H1 (cell line): ENCODE measurements at regions of chr20 and their contacts with region 1.

Region 1: DNA sequence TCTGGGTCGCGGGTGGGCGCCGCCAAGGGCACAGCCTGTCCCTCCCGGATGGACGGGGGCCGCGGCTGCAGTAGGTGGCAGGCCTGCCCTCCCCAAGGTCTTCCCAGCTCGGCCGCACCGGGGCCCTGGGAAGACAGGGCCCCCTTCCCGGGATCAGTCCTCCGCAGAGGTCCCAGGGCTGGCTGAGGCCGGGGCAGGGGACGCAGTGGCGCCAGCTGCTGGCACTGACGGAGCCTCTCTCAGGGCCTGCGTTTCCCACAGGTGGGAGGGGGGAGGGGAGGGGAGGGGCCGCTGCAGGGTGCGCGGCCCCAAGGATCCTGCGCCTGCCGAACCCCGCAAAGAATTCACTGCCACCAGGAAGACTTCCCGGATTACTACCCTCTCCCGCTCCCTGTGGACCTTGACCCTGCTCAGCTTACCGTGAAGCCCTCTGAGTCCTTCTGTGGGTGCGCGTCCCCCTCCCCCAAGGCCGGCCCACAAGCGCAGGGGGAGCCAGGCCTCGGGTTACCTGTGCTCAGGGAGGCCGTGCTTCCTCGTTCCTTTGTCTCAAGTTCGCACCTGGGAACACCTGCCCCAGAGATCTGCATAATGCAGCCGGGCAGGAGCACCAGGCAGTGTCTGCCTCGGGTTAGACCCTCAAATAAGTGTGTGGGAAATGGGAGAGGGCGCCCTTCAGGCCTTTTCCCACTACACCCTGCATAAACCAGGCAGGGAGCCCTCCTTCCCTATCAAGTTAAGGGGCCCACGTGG is 5.1 kb downstream of the LZTS3 start:
- DNase-seq: peak; percentile 46 to 84
- H3K4me3 ChIP-seq: peak overlapping the region; percentile 37 to 56 (median 48)
- H3K27ac ChIP-seq: peak overlapping the region; percentile 75
- H3K4me1 ChIP-seq: peaks cover 5 to 30% (median 24%) of the 10 kb centered on the region in 4 experiments
- H3K27me3 ChIP-seq: no peaks in the 10 kb centered on the region; a peak in 1 of 7 replicates
- CTCF ChIP-seq: peak; percentile 26 to 56 (median 30)
- EP300 ChIP-seq: no peak; a peak in 1 of 3 replicates
- POLR2A ChIP-seq: peak in 1 of 2 experiments; percentile 79; a peak in 2 of 3 replicates
- RAD21 ChIP-seq: peak; percentile 10 to 40; a peak in 2 of 4 replicates

Region 2: DNA sequence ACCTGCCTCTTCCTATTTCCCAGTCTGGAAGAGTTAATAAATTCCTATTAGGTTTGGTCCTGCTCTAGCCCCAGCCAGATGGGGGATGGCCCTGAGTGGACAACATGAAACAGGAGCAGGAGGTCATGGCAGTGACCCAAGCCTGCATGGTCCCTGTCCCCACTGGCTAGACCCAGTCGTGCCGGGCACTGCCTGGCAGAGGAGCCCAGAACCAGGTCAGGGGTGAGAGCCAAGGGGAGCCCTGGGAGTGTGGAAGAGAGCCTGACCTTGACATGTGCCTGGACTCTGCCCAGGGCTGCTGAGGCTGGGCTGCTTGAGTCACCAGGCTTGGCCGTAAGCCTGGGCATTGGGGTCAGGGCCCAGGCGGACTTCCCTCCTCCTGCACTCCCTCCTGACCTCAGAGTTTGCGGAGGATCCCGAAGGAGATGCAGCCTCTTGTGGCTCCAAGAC is 87.3 kb before region 1 on chr20:
- CTCF ChIA-PET with region 1: no interaction called
- POLR2A ChIA-PET with region 1: no interaction called
- DNase-seq: no peak
- H3K4me3 ChIP-seq: no peak overlapping the region
- H3K27ac ChIP-seq: no peak overlapping the region
- H3K4me1 ChIP-seq: peaks cover 0 to 8% (median 6%) of the 10 kb centered on the region in 4 experiments; a peak in 5 of 7 replicates
- H3K27me3 ChIP-seq: peaks cover 27 to 43% (median 37%) of the 10 kb centered on the region in 4 experiments
- CTCF ChIP-seq: no peak
- EP300 ChIP-seq: no peak
- POLR2A ChIP-seq: no peak
- RAD21 ChIP-seq: no peak

Region 3: GRCh38 chr20:3190681-3191111 is 22.4 kb after region 1 on chr20:
- CTCF ChIA-PET with region 1: interaction called, 3 read pairs
- POLR2A ChIA-PET with region 1: interaction called, 11 read pairs
- DNase-seq: no peak
- H3K4me3 ChIP-seq: no peak overlapping the region
- H3K27ac ChIP-seq: no peak overlapping the region
- H3K4me1 ChIP-seq: no peaks in the 10 kb centered on the region
- H3K27me3 ChIP-seq: no peaks in the 10 kb centered on the region
- CTCF ChIP-seq: peak in 1 of 3 experiments; percentile 21; a peak in 1 of 4 replicates
- EP300 ChIP-seq: no peak
- POLR2A ChIP-seq: no peak
- RAD21 ChIP-seq: 0 out of 4 replicates have a peak, but pooled peaks of 1 of the 2 experiments have one; percentile 18

Region 4: GRCh38 chr20:3854462-3854871 is 686.2 kb after region 1 on chr20:
- CTCF ChIA-PET with region 1: no interaction called
- POLR2A ChIA-PET with region 1: no interaction called
- DNase-seq: no peak
- H3K4me3 ChIP-seq: no peak overlapping the region
- H3K27ac ChIP-seq: no peak overlapping the region
- H3K4me1 ChIP-seq: no peaks in the 10 kb centered on the region; a peak in 1 of 7 replicates
- H3K27me3 ChIP-seq: no peaks in the 10 kb centered on the region
- CTCF ChIP-seq: no peak
- EP300 ChIP-seq: no peak
- POLR2A ChIP-seq: no peak
- RAD21 ChIP-seq: no peak